ENCODE measurements at regions of chr14 and their contacts with region 1.

Region 1: DNA sequence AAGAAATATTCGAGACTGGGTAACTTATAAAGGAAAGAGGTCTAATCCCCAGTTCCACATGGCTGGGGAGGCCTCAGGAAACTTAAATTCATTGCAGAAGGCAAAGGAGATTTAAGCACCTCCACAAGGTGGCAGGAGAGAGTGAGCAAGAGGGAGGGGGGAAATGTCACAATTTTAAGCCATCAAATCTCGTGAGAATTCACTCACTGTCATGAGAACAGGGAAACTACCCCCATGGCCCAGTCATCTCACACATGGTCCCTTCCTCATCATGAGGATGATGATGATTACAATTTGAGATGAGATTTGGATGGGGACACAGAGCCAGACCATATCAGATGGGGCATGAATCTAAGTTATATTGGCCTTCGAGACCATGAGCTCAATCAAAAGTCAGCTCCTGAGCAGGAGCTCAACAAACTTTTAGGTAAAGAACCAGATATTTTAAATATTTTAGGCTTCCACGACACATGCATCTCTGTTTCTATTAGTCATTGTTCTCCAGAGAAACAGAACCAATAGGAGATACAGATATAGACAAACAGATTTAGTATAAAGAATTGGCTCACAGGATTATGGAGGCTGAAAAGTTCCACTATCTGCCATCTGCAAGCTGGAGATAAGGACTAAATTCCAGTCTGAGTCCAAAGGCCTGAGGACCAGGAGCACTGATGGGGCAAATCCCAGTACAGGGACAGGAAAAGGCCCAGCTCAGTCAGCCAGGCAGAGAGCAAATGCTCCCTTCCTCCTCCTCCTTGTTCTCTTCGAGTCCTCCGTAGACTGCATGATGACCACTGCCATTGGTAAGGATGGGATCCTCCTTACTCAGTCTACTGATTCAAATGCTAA is 24.9 kb downstream of the DGLUCY start:
- DNase-seq: peak; percentile 75
- ATAC-seq: peak; percentile 25
- H3K4me3 ChIP-seq: no peak overlapping the region
- H3K27ac ChIP-seq: no peak overlapping the region
- H3K4me1 ChIP-seq: peaks cover 8% of the 10 kb centered on the region
- H3K27me3 ChIP-seq: no peaks in the 10 kb centered on the region
- CTCF ChIP-seq: peak; percentile 78

Region 2: GRCh38 chr14:90903101-90903500 is 235.6 kb before region 1 on chr14:
- CTCF ChIA-PET with region 1: interaction called, 3 read pairs
- POLR2A ChIA-PET with region 1: no interaction called
- intact Hi-C with region 1: loop called (anchors 1 kb)
- DNase-seq: peak; percentile 75
- ATAC-seq: peak; percentile 99
- H3K4me3 ChIP-seq: no peak overlapping the region
- H3K27ac ChIP-seq: no peak overlapping the region
- H3K4me1 ChIP-seq: no peaks in the 10 kb centered on the region
- H3K27me3 ChIP-seq: no peaks in the 10 kb centered on the region
- CTCF ChIP-seq: peak; percentile 91

Region 3: GRCh38 chr14:91180611-91181010 is 41.9 kb after region 1 on chr14:
- CTCF ChIA-PET with region 1: no interaction called
- POLR2A ChIA-PET with region 1: no interaction called
- intact Hi-C with region 1: no loop called
- DNase-seq: no peak
- ATAC-seq: no peak
- H3K4me3 ChIP-seq: no peak overlapping the region
- H3K27ac ChIP-seq: no peak overlapping the region
- H3K4me1 ChIP-seq: no peaks in the 10 kb centered on the region
- H3K27me3 ChIP-seq: no peaks in the 10 kb centered on the region
- CTCF ChIP-seq: no peak

Region 4: GRCh38 chr14:91402771-91403600 is 264.3 kb after region 1 on chr14:
- CTCF ChIA-PET with region 1: no interaction called
- POLR2A ChIA-PET with region 1: no interaction called
- intact Hi-C with region 1: no loop called
- DNase-seq: no peak
- ATAC-seq: no peak
- H3K4me3 ChIP-seq: no peak overlapping the region
- H3K27ac ChIP-seq: no peak overlapping the region
- H3K4me1 ChIP-seq: peaks cover 7% of the 10 kb centered on the region
- H3K27me3 ChIP-seq: no peaks in the 10 kb centered on the region
- CTCF ChIP-seq: no peak

Measured in PC-3 (cell line).